ENCODE measurements at regions of chr14 and their contacts with region 1.

Region 1: DNA sequence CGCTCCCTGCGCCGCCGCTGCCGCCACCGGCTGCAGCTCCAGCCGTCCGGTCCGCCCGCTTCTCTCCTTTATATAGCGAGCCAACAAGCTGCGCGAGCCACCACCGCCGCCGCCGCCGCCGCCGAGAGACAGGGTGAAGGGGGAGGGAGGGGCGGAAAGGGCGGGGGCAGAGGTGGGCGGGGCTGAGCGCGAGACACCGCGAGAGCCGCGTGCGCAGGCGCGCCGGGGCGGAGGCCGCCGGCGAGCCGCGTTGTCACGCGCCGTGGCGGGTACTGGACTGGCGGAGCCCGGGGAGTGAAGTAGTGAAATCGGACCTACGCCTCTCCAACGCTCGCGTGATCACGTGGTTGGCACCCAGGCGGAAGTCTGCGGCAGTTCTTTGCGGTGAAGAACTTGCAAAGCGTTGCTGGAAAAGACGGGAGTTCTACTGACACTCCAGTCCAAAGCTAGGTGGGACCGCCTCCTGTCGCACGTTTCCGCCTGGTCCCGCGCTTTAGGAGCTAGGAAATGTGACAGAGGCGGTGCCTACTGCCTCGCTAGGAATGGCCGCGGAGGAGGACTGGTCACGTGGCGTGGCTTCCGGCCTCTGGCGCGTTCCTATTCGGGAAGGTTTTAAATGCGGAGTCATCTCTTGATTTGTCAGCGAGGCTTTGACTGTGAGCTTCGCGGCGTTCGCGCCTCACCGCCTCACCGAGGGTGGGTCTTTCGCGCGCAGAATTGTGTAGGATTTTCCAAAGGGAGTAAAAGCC is at the start of gene GTF2A1:
- DNase-seq: peak; percentile 96 to 97 (median 96)
- H3K4me3 ChIP-seq: peak within 1 kb of the TSS; percentile 92 to 99
- H3K4me3 Mint-ChIP-seq: peak within 1 kb of the TSS; percentile 98 to 100 (median 100)
- H3K27ac ChIP-seq: peak within 1 kb of the TSS; percentile 95
- H3K27ac Mint-ChIP-seq: peak within 1 kb of the TSS; percentile 99 to 100 (median 99)
- H3K4me1 ChIP-seq: peaks cover 35% of the 10 kb centered on the region
- H3K4me1 Mint-ChIP-seq: peaks cover 17 to 49% (median 31%) of the 10 kb centered on the region in 4 donors
- H3K27me3 ChIP-seq: no peaks in the 10 kb centered on the region
- H3K27me3 Mint-ChIP-seq: no peaks in the 10 kb centered on the region
- total RNA-seq, gene GTF2A1: 34.2 to 40.8 TPM

Region 2: DNA sequence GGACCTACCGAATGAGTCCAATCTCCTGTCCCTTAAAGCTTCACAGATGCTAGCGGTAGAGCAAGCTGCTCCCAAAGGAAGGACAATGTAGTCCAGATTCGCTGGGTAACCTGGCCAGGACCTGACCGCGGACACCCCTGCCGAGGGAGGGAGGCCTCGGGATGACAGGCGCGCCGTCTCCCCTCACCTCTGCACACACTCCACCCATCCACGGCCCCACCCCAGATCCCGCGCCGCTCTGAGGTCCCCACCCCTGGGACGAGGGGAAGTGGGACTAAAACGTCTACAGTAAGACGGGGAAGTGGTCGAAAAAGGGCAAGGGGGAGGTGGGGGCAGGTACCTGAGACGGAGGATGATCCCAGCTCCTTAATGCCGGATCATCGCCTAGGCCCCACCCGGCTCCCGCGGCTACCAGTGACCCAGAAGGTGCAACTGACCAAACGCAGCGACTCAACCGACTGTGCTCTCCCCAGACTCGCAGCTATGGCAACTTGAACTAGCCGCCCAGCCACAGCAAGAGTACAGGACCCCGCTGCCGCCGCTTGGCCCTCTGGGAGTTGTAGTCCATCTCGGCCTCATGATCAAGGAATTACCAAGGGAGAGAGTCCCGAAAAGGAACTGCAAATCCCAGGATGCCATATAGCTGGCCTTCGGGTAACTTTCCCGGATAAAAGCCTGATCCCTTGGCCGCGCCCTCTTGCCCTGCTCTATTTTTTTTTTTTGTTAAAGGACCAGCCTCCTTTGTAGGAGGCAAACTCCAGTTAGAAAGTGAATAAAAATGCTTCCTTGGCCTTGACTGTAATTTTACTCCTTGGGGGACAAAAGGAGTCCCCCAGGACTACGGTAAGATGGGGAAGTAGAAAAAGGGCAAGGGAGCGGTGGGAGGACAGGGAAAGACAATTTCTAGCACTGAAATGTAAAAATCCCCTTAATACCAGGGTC is 279.5 kb before region 1 on chr14 and contains the start of gene CEP128:
- CTCF ChIA-PET with region 1: no interaction called
- POLR2A ChIA-PET with region 1: interaction called, 28 read pairs
- intact Hi-C with region 1: loop called (anchors 1 kb)
- DNase-seq: peak; percentile 77 to 84 (median 82)
- H3K4me3 ChIP-seq: peak within 1 kb of the TSS; percentile 64 to 75
- H3K4me3 Mint-ChIP-seq: peak within 1 kb of the TSS; percentile 89 to 95 (median 92)
- H3K27ac ChIP-seq: peak within 1 kb of the TSS; percentile 80
- H3K27ac Mint-ChIP-seq: peak within 1 kb of the TSS; percentile 82 to 96 (median 93)
- H3K4me1 ChIP-seq: peaks cover 30% of the 10 kb centered on the region
- H3K4me1 Mint-ChIP-seq: peaks cover 19 to 34% (median 25%) of the 10 kb centered on the region in 4 donors
- H3K27me3 ChIP-seq: no peaks in the 10 kb centered on the region
- H3K27me3 Mint-ChIP-seq: no peaks in the 10 kb centered on the region
- total RNA-seq, gene CEP128: 20.1 to 21.6 TPM

Region 3: DNA sequence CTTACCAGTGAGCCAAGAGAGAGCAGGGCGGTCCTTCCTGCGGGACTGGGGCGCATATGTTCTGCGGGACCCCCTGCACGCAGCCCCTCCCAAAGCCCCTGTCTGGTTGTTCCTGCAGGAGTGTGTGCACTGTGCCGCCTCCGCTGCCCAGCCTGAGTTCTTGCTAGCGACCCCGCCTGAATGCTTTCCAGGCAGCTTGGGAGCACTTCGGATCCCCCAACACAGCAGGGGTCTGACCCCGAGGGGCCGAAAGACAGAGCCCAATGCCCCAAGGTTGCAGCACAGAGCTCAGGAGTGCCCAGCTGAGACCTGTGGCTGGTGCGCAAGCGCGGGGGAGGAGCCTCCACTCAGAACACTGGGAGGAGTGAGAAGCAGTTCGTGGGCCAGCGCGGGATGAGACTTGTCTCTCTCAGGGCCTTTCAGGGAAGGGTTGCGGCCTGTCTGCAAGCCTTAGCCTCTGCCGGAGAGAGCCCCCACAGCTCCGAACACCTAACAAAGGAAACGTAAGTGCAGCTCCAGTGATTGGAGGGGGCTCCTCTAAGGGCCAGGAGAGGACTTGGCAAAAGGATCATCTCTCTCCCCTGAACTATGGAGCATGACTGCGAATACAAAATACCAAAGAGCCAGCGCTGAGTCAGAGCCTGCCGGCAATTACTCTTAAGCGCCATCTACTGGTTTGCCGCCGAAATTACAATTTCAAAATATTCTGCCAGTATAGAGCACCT is 50.7 kb before region 1 on chr14:
- CTCF ChIA-PET with region 1: interaction called, 17 read pairs
- POLR2A ChIA-PET with region 1: interaction called, 49 read pairs
- intact Hi-C with region 1: loop called (anchors 1 kb)
- DNase-seq: peak; percentile 90 to 92 (median 91)
- H3K4me3 ChIP-seq: peak overlapping the region; percentile 47 to 94
- H3K4me3 Mint-ChIP-seq: peak overlapping the region; percentile 89 to 96 (median 92)
- H3K27ac ChIP-seq: peak overlapping the region; percentile 55
- H3K27ac Mint-ChIP-seq: peak overlapping the region; percentile 81 to 98 (median 94)
- H3K4me1 ChIP-seq: peaks cover 16% of the 10 kb centered on the region
- H3K4me1 Mint-ChIP-seq: peaks cover 16 to 30% (median 22%) of the 10 kb centered on the region in 4 donors
- H3K27me3 ChIP-seq: no peaks in the 10 kb centered on the region
- H3K27me3 Mint-ChIP-seq: no peaks in the 10 kb centered on the region

Region 4: DNA sequence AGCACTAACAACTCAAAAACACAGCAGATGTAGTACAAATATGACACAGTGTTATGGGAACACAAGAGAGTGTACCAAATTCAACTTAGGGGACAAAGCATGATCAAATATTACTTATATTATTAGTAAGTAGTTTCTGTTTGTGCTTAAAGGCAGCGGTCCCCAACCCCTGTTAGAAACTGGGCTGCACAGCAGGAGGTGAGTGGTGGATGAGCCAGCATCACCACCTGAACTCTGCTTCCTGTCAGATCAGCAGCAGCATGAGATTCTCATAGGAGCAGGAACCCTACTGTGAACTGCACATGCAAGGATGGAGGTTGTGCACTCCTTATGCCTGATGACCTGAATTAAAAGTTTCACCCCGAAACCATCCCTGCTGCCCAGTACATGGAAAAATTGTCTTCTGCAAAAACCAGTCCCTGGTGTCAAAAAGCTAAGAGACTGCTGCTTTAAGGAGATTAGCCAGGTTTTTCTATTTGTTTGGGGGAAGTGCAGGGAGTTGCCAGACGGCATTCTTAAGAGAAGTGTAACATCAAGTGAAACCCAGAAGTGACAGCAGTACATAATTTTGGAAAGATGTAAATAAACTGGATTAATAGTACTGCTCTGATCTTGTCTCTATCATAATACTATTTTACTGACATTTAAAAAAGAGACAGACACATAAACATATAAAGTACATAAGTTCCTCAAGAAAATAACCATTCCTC is 26.9 kb before region 1 on chr14:
- CTCF ChIA-PET with region 1: no interaction called
- POLR2A ChIA-PET with region 1: interaction called, 16 read pairs
- intact Hi-C with region 1: no loop called
- DNase-seq: no peak
- H3K4me3 ChIP-seq: no peak overlapping the region
- H3K4me3 Mint-ChIP-seq: no peak overlapping the region
- H3K27ac ChIP-seq: no peak overlapping the region
- H3K27ac Mint-ChIP-seq: peak overlapping the region; percentile 23 to 84 (median 69)
- H3K4me1 ChIP-seq: peaks cover 54% of the 10 kb centered on the region
- H3K4me1 Mint-ChIP-seq: peaks cover 34 to 60% (median 43%) of the 10 kb centered on the region in 4 donors
- H3K27me3 ChIP-seq: no peaks in the 10 kb centered on the region
- H3K27me3 Mint-ChIP-seq: no peaks in the 10 kb centered on the region

Region 5: DNA sequence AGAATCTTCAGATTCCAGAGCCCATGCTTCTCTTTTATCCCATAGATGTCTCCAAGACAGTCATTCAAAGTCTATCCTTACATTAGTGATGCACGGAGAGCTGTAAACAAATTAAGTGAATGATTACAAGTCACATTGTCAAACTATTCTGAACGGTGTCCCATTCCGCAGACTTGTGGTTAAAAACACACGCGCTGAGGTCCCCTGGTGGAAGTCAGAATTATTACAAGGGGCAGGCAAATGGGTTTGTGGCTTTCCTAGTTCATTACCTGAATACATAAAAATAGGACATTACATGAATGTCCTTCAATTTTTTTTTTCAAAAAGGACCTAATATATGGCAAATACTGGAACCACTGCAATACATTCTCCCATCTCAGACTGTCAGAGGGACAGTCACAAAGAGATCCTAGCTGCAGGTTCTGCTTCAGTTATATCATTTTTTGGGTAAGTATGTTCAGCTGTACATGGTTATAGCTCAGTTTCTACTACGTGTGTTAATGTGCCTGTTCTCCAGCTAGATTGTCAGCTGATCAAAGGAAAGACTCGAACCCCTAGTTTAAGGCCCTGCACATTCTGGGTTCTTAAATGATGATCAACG is 232.3 kb after region 1 on chr14:
- CTCF ChIA-PET with region 1: no interaction called
- POLR2A ChIA-PET with region 1: no interaction called
- intact Hi-C with region 1: loop called (anchors 5 kb)
- DNase-seq: peak in 4 of 5 donors; percentile 39 to 46 (median 42)
- H3K4me3 ChIP-seq: no peak overlapping the region
- H3K4me3 Mint-ChIP-seq: no peak overlapping the region
- H3K27ac ChIP-seq: no peak overlapping the region
- H3K27ac Mint-ChIP-seq: no peak overlapping the region
- H3K4me1 ChIP-seq: no peaks in the 10 kb centered on the region
- H3K4me1 Mint-ChIP-seq: peaks cover 0 to 4% (median 3%) of the 10 kb centered on the region in 4 donors
- H3K27me3 ChIP-seq: no peaks in the 10 kb centered on the region
- H3K27me3 Mint-ChIP-seq: peaks cover 5 to 14% of the 10 kb centered on the region in 2 donors

Region 6: GRCh38 chr14:81533536-81534343 is 312.7 kb after region 1 on chr14 and contains the start of gene SEL1L:
- CTCF ChIA-PET with region 1: no interaction called
- POLR2A ChIA-PET with region 1: interaction called, 26 read pairs
- intact Hi-C with region 1: loop called (anchors 1 kb)
- DNase-seq: peak; percentile 99 to 100 (median 99)
- H3K4me3 ChIP-seq: peak within 1 kb of the TSS; percentile 84 to 91
- H3K4me3 Mint-ChIP-seq: peak within 1 kb of the TSS; percentile 94 to 97 (median 96)
- H3K27ac ChIP-seq: peak within 1 kb of the TSS; percentile 86
- H3K27ac Mint-ChIP-seq: peak within 1 kb of the TSS; percentile 88 to 97 (median 94)
- H3K4me1 ChIP-seq: peaks cover 53% of the 10 kb centered on the region
- H3K4me1 Mint-ChIP-seq: peaks cover 33 to 69% (median 52%) of the 10 kb centered on the region in 4 donors
- H3K27me3 ChIP-seq: no peaks in the 10 kb centered on the region
- H3K27me3 Mint-ChIP-seq: peaks cover 0 to 2% of the 10 kb centered on the region in 2 donors
- total RNA-seq, gene SEL1L: 65.7 TPM